ENCODE measurements at regions of chr17 and their contacts with region 1.

Region 1: DNA sequence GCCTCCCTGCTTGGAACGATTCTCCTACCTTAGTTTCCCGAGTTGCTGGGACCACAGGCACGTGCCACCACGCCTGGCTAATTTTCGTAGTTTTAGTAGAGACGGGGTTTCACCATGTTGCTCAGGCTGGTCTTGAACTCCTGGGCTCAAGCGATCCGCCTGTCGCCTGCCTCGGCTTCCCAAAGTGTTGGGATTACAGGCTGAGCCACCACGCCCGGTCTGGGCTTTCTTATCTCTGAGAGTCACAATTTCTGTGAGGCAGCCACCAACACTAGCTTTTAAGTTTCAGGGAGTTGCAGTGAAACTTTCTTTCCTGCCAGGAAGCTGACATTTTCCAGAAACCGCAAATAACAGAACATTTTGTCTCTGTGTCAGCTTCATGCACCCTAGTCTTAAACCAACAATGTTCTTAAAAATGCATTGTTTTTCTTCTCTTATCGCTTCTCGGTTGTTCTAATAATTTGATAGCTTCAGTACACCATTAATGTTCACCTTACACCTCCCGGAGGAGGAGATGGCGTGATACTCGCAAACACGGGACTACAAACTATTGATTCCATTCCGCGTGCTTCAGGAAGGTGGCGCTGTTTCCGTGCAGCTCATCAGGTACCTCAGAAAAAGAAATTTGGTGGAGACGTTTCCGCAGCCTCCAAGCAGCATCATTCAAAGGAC is 7.4 kb upstream of the DHRS7B start:
- DNase-seq: peak; percentile 80
- H3K4me3 Mint-ChIP-seq: no peak overlapping the region
- H3K27ac Mint-ChIP-seq: no peak overlapping the region
- H3K4me1 Mint-ChIP-seq: peaks cover 9% of the 10 kb centered on the region
- H3K27me3 Mint-ChIP-seq: peaks cover 28% of the 10 kb centered on the region

Region 2: DNA sequence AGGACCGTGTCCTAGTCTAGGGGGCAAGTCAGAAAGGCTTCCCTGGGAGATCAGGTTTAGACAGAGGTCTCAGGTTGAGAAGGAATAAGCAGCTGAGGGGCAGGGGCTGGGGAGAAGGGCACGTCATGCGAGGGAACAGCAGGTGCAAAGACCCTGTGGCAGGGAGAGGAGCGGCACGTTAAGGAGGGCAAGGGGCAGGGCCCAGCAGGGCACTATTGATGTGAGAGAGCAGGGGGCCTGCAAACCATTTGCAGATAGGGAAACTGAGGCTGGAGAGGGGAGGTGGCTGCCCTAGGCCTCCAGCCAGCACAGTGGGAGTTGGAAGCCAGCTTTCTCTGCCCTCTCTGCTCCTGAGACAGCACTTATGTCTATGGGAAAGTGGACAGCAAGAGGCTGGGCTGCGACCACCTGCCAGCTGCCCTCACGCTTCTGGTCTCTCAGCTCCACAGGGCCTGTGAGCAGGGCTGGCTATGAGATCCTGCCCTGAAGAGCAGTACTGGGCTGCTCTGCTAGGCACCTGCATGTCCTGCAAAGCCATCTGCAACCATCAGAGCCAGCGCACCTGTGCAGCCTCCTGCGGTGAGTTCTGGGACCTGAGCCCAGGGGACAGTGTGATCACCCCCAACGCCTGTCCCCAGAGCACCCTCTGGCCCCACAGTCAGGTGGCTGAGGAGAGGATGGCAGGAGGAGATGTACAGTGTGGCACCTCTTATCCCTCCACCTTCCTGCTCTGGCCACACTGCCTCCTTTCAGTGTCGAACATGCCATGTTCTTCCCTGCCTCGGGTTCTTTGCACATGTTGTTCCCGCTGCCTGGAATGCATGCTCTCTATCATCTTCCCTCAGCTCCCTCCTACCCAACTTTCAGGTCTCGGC is 138.1 kb before region 1 on chr17:
- CTCF ChIA-PET with region 1: no interaction called
- DNase-seq: no peak
- H3K4me3 Mint-ChIP-seq: no peak overlapping the region
- H3K27ac Mint-ChIP-seq: no peak overlapping the region
- H3K4me1 Mint-ChIP-seq: no peaks in the 10 kb centered on the region
- H3K27me3 Mint-ChIP-seq: peaks cover 22% of the 10 kb centered on the region

Region 3: GRCh38 chr17:21098934-21099689 is 20.3 kb before region 1 on chr17:
- CTCF ChIA-PET with region 1: interaction called, 29 read pairs
- DNase-seq: peak; percentile 87
- H3K4me3 Mint-ChIP-seq: peak overlapping the region; percentile 92
- H3K27ac Mint-ChIP-seq: peak overlapping the region; percentile 92
- H3K4me1 Mint-ChIP-seq: peaks cover 28% of the 10 kb centered on the region
- H3K27me3 Mint-ChIP-seq: no peaks in the 10 kb centered on the region

Region 4: DNA sequence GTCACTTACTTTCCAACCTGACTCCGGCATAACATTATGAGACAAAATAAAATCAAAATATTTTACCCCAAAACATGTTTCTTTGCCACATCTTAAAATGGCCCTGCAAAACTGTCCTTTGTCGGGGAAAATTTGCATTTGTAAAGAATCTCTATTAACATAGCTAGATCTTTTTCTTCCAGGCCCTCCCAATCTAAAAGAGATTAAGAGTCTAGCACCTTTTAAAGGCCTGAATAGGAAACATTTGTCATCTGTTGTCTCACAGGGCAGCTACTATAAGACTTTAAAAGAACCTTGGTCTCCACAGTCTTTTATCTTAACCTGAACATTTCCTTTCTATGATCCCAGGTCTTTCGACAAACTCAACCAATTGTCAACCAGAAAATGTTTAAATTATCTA is 10.7 kb before region 1 on chr17:
- CTCF ChIA-PET with region 1: interaction called, 29 read pairs
- DNase-seq: no peak
- H3K4me3 Mint-ChIP-seq: no peak overlapping the region
- H3K27ac Mint-ChIP-seq: no peak overlapping the region
- H3K4me1 Mint-ChIP-seq: no peaks in the 10 kb centered on the region
- H3K27me3 Mint-ChIP-seq: peaks cover 4% of the 10 kb centered on the region

Region 5: DNA sequence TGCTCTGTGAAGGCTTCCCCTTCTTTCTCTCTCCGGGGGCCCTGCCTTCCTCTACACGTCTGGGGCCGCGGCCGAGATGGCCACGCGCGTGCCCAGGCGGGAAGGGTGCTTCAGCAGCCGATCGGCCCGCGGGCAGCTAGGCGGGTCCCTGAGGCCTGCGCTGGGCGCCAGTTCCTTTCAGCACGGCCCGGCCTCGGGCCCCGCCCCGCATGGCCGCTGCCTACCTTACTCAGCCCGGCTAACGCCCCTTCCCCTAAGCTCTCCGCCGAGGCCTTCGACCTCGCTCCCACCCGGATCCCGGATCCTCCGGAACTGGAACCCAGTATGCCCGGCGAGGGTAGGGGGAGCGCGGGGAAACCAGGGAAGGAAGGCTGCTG is 94.2 kb after region 1 on chr17:
- CTCF ChIA-PET with region 1: interaction called, 10 read pairs
- DNase-seq: no peak
- H3K4me3 Mint-ChIP-seq: peak overlapping the region; percentile 97
- H3K27ac Mint-ChIP-seq: peak overlapping the region; percentile 90
- H3K4me1 Mint-ChIP-seq: peaks cover 63% of the 10 kb centered on the region
- H3K27me3 Mint-ChIP-seq: no peaks in the 10 kb centered on the region

Region 6: GRCh38 chr17:21275579-21276263 is 156.3 kb after region 1 on chr17:
- CTCF ChIA-PET with region 1: interaction called, 12 read pairs
- DNase-seq: peak; percentile 96
- H3K4me3 Mint-ChIP-seq: peak overlapping the region; percentile 90
- H3K27ac Mint-ChIP-seq: peak overlapping the region; percentile 75
- H3K4me1 Mint-ChIP-seq: peaks cover 54% of the 10 kb centered on the region
- H3K27me3 Mint-ChIP-seq: peaks cover 16% of the 10 kb centered on the region

Region 7: DNA sequence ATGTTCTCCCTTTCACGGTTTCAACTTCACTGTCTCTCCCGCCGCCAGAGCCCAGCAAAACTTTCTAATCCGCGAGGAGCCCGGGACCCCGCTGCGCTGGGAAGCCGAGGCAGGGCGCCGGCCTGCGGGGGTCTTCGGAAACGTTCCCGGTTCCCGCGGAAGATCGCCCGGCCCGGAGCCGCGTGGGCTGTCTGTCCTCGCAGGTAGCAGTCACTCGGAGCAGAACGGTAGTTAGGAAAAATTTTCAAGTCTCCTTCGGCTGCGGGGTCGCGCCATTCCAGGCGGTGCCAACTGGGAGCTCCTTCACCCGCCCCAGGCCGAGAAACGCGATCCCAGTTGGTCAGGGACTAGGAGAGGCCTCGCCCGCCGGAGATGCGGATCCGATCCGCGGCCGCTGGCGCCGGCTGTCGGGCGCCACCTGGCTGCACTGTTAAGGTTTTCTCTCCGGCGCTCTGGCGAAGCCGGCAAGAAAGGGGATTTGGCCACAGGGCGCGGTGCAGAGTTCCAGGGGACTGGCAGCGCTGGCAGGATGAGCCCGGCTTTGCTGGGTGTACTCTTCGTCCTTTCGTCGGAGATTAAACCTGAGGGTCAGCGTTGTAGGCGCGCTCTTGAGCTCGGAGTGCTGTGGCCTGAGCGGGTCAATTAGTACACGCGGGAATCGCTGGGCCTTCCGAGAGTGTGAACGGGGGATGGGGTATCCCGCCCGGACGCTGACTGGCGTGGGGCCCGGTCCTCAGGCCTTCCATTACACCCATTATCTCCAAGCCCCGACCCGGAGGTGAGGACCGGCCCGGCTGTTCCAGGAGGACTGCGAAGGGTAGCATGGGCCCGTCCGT is 392.2 kb after region 1 on chr17:
- CTCF ChIA-PET with region 1: interaction called, 18 read pairs
- DNase-seq: peak; percentile 76
- H3K4me3 Mint-ChIP-seq: peak overlapping the region; percentile 45
- H3K27ac Mint-ChIP-seq: no peak overlapping the region
- H3K4me1 Mint-ChIP-seq: peaks cover 23% of the 10 kb centered on the region
- H3K27me3 Mint-ChIP-seq: peaks cover 58% of the 10 kb centered on the region